ENCODE measurements at regions of chr15 and their contacts with region 1.

Region 1: DNA sequence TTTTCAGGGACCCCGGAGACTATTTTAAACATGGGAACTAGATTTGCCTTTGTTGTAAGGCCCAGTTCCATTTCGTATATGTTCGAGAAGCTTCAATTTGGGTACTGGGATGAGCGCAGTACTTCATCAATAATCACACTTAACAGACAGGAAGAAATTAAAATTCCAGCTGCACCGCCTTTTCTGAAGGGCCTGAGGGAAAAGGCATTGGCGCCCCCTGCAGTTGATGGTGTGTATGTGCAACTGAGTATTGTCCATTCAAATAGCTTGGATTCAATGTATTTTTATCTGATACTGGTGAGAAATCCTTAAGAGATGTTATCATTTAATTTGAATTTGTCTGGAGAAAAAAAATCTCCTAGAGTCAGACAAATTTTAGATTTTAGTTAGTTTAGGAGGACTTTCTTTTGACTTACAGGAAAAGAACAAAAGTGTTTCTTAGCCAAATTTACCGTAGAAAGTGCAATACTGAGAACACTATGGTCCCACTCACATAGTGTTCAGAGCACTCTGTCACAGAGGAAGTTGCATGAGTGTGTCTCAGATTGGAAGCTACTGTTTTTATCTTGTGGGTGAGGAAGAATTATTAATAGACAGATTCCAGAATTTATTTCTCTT is 5.4 kb upstream of the ALDH1A2 start:
- DNase-seq: peak; percentile 32 to 76 (median 62)
- H3K4me3 ChIP-seq: no peak overlapping the region
- H3K27ac ChIP-seq: no peak overlapping the region
- H3K4me1 ChIP-seq: no peaks in the 10 kb centered on the region
- H3K27me3 ChIP-seq: no peaks in the 10 kb centered on the region
- CTCF ChIP-seq: peak; percentile 58 to 82 (median 74)
- EP300 ChIP-seq: no peak
- POLR2A ChIP-seq: no peak

Region 2: GRCh38 chr15:57570994-57571393 is 499.9 kb before region 1 on chr15:
- intact Hi-C with region 1: loop called in 2 of 4 experiments (anchors 10 kb)
- DNase-seq: no peak
- H3K4me3 ChIP-seq: no peak overlapping the region
- H3K27ac ChIP-seq: no peak overlapping the region
- H3K4me1 ChIP-seq: no peaks in the 10 kb centered on the region
- H3K27me3 ChIP-seq: no peaks in the 10 kb centered on the region
- CTCF ChIP-seq: no peak
- EP300 ChIP-seq: no peak
- POLR2A ChIP-seq: no peak

Region 3: GRCh38 chr15:57751177-57751800 is 319.6 kb before region 1 on chr15:
- intact Hi-C with region 1: loop called in 3 of 4 experiments (anchors 2 to 5 kb)
- DNase-seq: no peak
- H3K4me3 ChIP-seq: no peak overlapping the region
- H3K27ac ChIP-seq: no peak overlapping the region
- H3K4me1 ChIP-seq: peaks cover 7% of the 10 kb centered on the region
- H3K27me3 ChIP-seq: no peaks in the 10 kb centered on the region
- CTCF ChIP-seq: peak in 2 of 3 donors; percentile 28 to 36
- EP300 ChIP-seq: no peak
- POLR2A ChIP-seq: no peak

Region 4: DNA sequence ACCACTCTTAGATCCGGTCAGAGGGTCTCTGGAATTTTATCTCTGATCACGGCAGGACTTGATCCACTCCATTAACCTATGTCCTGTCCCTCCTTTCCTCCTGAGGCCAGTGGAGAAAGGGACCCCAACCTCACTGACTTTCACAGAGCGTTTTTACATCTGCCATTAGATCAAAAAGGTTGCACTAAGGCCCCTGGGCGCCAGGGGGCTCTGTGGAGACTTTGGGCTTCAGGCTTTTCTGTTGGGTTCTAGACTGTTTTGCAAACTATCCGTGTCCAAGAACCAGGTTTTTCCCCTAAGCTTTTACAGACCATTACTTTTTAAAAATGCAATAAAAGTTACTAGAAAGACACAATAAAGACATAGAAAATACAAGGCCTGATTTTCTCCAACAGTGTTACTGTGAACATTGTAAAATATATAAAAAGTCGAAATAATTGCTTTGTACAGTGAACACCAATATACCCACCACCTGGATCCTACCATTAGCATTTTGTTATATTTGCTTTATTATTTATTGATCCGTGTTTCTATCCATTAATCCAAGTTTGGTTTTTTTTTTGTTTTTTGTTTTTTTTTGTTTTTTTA is 204.7 kb before region 1 on chr15:
- intact Hi-C with region 1: loop called in 2 of 4 experiments (anchors 2 to 5 kb)
- DNase-seq: peak in 3 of 5 donors; percentile 28 to 60 (median 30)
- H3K4me3 ChIP-seq: no peak overlapping the region
- H3K27ac ChIP-seq: no peak overlapping the region
- H3K4me1 ChIP-seq: no peaks in the 10 kb centered on the region
- H3K27me3 ChIP-seq: no peaks in the 10 kb centered on the region
- CTCF ChIP-seq: no peak
- EP300 ChIP-seq: no peak
- POLR2A ChIP-seq: no peak

Region 5: GRCh38 chr15:58269455-58270414 is 198.8 kb after region 1 on chr15:
- intact Hi-C with region 1: no loop called
- DNase-seq: no peak
- H3K4me3 ChIP-seq: no peak overlapping the region
- H3K27ac ChIP-seq: no peak overlapping the region
- H3K4me1 ChIP-seq: no peaks in the 10 kb centered on the region
- H3K27me3 ChIP-seq: no peaks in the 10 kb centered on the region
- CTCF ChIP-seq: no peak
- EP300 ChIP-seq: no peak
- POLR2A ChIP-seq: no peak